Activated T-helper 1 cell treated with anti-CD3 and anti-CD28 coated beads, Interleukin-12 subunit alpha, Interleukin-12 subunit beta, Interleukin-2, Interleukin-4 antibody, amounts not matched to agents 30 ng/mL and 10 ng/mL and 1 ng/mL, durations not matched to agents 14 hours and 24 hours and 36 hours (primary cell): ENCODE measurements at regions of chr3 and their contacts with region 1.

Region 1: GRCh38 chr3:172710664-172711453 is at the start of gene NCEH1:
- DNase-seq: peak; percentile 69
- H3K4me3 Mint-ChIP-seq: peak within 1 kb of the TSS; percentile 91
- H3K27ac Mint-ChIP-seq: no peak within 1 kb of the TSS
- H3K4me1 Mint-ChIP-seq: peaks cover 20% of the 10 kb centered on the region
- H3K27me3 Mint-ChIP-seq: peaks cover 14% of the 10 kb centered on the region
- total RNA-seq, gene NCEH1: 7.4 and 8.8 TPM in 2 replicates

Region 2: GRCh38 chr3:172415323-172415722 is 295.5 kb before region 1 on chr3:
- intact Hi-C with region 1: no loop called
- DNase-seq: no peak
- H3K4me3 Mint-ChIP-seq: no peak overlapping the region
- H3K27ac Mint-ChIP-seq: no peak overlapping the region
- H3K4me1 Mint-ChIP-seq: no peaks in the 10 kb centered on the region
- H3K27me3 Mint-ChIP-seq: peaks cover 39% of the 10 kb centered on the region

Region 3: DNA sequence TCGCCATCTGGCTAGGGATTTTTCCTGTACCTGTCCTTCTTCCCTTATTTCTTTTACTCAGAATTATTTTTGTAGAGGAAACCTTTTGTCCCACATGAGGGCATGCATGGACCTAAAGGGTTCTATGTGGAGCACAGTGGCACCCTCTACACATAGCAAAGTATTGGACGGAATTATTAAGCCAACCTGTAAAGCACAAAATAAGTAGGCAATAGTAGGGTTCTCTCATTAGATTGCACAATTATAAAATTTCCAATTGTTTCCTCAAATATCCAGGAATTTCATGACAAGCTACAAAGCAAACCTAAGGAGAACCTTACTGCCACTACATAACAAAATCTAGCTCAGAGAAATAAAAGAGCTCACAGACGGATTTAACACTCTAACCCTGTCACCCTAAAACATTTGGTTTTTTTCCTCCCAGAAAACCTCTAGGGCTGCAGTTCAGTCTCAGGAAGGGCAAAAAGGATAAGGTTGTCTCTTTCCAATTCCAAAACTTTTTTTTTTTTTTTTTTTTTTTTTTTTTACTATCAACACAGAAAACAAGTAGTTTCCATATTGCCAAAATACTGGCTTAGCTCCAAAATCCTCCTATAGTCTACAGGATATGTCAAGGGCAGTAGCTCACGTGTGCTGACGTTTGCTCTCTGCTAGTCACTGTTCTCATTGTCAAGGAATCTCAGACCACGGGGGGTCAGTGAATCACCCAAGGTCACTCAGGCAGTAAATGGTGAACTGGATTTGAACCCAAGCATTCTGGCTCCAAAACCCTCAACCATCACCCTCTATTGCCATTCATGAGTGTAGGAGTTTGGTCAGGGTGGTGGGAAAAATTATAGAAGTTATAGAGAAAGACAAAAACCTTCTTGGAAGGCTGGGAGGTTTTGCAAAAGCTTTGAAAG is 52.3 kb before region 1 on chr3:
- intact Hi-C with region 1: no loop called
- DNase-seq: no peak
- H3K4me3 Mint-ChIP-seq: no peak overlapping the region
- H3K27ac Mint-ChIP-seq: no peak overlapping the region
- H3K4me1 Mint-ChIP-seq: no peaks in the 10 kb centered on the region
- H3K27me3 Mint-ChIP-seq: peaks cover 2% of the 10 kb centered on the region

Region 4: DNA sequence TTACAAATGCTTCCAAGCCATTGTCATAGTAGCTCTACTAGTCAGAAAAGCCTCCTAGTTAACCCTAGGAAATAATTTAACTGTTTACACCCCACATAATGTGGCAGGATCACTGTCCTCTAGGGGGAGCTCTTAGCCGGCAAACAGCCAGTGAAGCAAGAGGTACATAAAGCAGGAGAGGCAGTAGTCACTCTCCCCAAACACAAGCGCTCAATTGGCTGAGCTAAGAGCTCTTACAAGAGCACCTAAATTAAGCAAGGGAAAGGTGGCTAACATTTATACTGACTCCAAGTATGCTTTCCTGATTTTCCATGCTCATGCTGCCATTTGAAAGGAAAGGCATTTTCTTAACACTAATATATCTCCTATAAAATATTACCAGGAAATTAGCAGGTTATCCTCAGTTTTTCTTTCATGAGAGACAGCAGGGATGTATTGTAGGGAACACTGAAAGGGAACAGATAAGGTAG is 37.6 kb before region 1 on chr3:
- intact Hi-C with region 1: loop called (anchors 1 kb)
- DNase-seq: peak; percentile 52
- H3K4me3 Mint-ChIP-seq: no peak overlapping the region
- H3K27ac Mint-ChIP-seq: no peak overlapping the region
- H3K4me1 Mint-ChIP-seq: peaks cover 5% of the 10 kb centered on the region
- H3K27me3 Mint-ChIP-seq: no peaks in the 10 kb centered on the region